ENCODE measurements at regions of chr17 and their contacts with region 1.

Region 1: DNA sequence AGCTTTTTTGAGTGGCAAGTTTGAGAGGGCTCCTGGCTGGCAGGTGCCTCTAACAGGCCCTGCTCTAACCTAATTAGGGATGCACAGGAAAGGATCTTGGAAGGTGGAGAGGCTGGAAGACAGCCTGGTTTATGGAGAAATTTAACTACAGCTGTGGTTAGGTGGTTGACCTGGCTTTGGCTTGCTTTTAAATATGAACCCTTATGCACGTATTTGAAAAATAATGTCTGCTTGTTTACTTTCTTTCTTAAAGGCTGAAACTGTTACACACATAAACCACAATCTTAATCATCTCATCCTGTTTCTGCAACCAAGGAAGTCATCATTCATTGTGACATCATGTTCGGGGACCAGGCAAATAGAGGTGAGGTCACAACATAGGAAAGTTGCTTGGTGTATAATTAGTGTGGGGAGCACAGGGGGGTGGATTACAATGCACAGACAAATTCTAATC is 23.1 kb upstream of the DHRS13 start:
- DNase-seq: peak; percentile 69
- H3K4me3 ChIP-seq: no peak overlapping the region
- H3K27me3 ChIP-seq: no peaks in the 10 kb centered on the region
- CTCF ChIP-seq: no peak

Region 2: DNA sequence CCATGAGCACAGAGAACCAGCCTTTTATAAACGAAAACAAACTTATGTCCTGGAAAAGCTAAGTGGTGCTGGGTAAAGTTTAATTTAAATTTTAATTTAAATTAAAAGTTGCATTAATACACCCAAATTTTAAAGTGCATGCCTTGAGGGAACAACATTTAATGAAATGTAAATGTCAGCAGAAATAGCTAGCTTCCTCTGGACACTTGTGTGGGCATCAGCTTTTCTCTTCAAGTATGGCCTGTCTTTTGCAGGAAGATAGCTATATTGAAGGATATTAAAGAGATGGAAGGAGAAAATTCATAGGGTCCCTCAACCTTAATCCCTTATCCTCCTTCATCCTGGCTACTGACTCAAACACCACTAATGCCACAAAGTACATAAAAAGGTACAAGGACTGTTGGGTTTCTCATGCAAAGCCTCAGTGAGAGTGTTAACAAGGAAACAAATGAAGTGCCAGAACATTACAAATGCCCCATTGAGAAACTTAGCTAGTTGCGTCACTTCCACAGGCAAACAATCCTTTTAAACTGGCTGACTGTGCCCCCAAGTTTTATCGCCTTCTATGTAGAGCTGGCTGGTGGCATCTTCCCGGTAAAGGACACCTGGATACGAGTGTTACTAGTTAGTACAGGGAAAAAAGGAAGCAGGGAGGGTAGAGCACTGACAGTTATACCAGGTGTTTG is 11.2 kb after region 1 on chr17:
- CTCF ChIA-PET with region 1: interaction called, 17 read pairs
- POLR2A ChIA-PET with region 1: no interaction called
- DNase-seq: no peak
- H3K4me3 ChIP-seq: no peak overlapping the region
- H3K27me3 ChIP-seq: no peaks in the 10 kb centered on the region
- CTCF ChIP-seq: no peak

Region 3: DNA sequence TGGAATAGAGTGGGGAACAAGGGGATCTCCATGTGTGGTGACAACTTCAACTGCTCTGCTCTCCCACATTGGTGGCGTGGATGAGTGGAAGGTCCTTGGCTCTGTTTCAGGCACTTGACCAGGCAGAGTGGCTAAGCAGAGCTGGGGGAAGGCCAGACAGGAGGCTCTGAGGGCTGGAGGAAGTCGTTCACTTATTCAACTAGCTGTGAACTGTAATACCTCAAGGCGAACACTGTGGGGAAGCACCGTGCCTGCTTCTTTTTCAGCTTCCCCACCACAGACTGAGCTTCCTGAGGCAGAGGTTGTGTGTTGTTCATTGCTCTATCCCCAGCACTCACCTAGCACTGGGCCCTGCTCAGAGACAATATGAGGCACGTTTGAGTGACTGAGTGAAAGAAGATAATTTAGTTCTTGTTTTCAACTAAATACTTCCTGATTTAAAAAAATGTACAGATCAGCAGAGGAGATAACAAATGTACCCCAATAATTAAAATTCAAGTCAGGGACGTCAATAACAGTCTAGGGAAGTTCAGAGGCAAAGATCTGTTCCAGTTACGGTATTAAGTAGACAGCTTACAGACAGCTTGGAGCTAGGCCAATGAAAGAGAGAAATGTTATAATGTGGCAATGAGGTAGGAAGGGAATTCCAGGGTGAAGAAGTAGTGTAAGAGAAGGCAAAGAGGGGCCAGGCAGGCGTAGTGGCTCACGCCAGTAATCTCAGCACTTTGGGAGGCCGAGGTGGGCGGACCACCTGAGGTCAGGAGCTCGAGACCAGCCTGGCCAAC is 219.5 kb after region 1 on chr17:
- CTCF ChIA-PET with region 1: no interaction called
- POLR2A ChIA-PET with region 1: no interaction called
- DNase-seq: no peak
- H3K4me3 ChIP-seq: no peak overlapping the region
- H3K27me3 ChIP-seq: no peaks in the 10 kb centered on the region
- CTCF ChIP-seq: peak; percentile 74

Measured in BJ (cell line).